Activated CD4-positive, alpha-beta T cell treated with anti-CD3 and anti-CD28 coated beads, Interleukin-2, amount 10 ng/mL, durations not matched to agents 24 days and 14 days (primary cell): ENCODE measurements at regions of chr4 and their contacts with region 1.

Region 1: DNA sequence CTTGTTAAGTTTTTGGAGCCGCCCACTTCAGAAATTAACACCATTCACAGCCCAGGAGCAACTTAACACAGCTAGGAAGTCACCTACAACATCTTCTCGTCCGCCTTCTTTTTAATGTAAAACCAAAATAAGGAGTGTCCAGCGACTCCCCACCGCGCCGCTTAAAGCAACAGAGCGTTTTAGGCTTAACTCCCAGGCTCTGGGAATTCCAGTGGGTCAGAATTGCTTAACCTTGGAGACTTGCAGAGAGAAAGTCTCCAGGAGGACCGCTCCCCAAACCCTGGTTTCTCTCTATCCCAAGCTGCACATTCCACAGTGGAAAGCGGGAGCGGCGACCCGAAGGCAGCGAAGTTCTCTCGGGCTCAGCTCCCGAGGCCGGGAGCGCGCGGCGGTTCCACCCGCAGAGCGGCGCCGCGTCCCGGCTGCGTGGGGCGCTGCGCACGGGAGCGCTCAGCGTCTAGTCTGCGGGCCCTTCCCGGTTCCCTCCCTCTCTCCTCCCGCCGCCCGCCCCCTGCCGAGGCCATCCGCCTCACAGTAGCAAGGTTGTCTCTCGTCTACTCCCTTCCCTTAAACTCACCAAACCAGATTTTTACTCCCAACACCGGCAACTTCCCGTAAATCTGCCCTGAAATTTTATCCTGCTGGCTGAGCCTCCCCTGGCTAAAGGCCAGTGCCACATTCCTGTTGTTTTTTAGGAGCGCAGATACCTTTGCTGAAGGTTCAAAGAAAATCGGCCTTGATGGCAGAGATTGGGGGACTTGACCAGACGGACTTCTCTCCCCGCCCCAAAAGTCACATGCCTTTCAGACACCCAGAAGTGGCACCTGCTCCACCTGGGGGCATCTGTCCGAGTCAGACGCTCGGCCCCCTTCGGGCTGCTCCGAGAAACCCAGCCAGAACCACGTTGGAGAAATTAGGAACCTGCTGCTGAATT is at the start of gene RBM47:
- DNase-seq: peak; percentile 73
- H3K4me3 Mint-ChIP-seq: peak within 1 kb of the TSS; percentile 89
- H3K27ac Mint-ChIP-seq: peak within 1 kb of the TSS; percentile 64
- H3K4me1 Mint-ChIP-seq: peaks cover 34% of the 10 kb centered on the region
- H3K27me3 Mint-ChIP-seq: peaks cover 20% of the 10 kb centered on the region
- total RNA-seq, gene RBM47: 10.7 and 13.0 TPM in 2 replicates

Region 2: DNA sequence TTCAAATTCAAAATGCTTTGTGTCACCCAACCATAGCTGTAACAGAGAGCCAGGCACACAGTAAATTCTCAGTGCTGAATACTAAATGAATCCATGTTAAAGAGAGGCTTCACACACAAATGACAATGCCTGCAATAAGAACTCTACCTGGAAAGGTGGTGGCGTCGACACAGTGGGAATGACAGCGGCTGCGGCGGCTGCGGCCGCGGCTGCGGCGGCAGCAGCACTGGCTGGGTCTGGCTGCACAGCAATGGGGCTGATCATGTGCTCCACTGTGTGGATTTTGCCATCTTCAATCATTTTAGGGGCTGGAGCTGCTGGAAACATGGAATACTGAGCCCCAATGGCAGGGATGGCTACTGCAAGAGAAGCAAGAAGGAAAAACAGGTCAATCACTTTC is 197.2 kb before region 1 on chr4:
- intact Hi-C with region 1: loop called (anchors 2 kb)
- DNase-seq: no peak
- H3K4me3 Mint-ChIP-seq: peak overlapping the region; percentile 45
- H3K27ac Mint-ChIP-seq: peak overlapping the region; percentile 63
- H3K4me1 Mint-ChIP-seq: peaks cover 48% of the 10 kb centered on the region
- H3K27me3 Mint-ChIP-seq: no peaks in the 10 kb centered on the region

Region 3: GRCh38 chr4:40550948-40551462 is 78.7 kb before region 1 on chr4:
- intact Hi-C with region 1: loop called (anchors 5 kb)
- DNase-seq: peak; percentile 82
- H3K4me3 Mint-ChIP-seq: peak overlapping the region; percentile 84
- H3K27ac Mint-ChIP-seq: peak overlapping the region; percentile 84
- H3K4me1 Mint-ChIP-seq: peaks cover 40% of the 10 kb centered on the region
- H3K27me3 Mint-ChIP-seq: no peaks in the 10 kb centered on the region

Region 4: DNA sequence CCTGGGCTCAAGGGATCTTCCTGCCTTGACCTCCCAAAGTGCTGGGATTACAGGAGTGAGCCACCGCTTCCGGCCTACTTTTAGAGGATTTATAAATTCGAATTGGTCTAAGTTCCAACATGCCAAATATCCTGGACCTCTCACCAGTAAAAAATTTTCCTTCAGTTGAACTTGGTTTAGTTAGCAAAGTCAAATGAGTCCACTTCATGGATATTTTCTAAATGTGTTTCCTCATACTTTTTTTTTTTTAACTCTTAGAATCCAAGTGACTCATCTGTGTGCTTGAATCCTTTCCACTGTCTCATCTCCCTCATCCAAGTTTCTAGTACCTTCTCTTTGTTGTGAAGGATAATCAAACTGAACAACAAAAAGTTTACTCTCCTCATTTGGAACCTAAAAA is 49.7 kb before region 1 on chr4:
- intact Hi-C with region 1: loop called (anchors 5 kb)
- DNase-seq: no peak
- H3K4me3 Mint-ChIP-seq: no peak overlapping the region
- H3K27ac Mint-ChIP-seq: no peak overlapping the region
- H3K4me1 Mint-ChIP-seq: peaks cover 42% of the 10 kb centered on the region
- H3K27me3 Mint-ChIP-seq: peaks cover 3% of the 10 kb centered on the region

Region 5: DNA sequence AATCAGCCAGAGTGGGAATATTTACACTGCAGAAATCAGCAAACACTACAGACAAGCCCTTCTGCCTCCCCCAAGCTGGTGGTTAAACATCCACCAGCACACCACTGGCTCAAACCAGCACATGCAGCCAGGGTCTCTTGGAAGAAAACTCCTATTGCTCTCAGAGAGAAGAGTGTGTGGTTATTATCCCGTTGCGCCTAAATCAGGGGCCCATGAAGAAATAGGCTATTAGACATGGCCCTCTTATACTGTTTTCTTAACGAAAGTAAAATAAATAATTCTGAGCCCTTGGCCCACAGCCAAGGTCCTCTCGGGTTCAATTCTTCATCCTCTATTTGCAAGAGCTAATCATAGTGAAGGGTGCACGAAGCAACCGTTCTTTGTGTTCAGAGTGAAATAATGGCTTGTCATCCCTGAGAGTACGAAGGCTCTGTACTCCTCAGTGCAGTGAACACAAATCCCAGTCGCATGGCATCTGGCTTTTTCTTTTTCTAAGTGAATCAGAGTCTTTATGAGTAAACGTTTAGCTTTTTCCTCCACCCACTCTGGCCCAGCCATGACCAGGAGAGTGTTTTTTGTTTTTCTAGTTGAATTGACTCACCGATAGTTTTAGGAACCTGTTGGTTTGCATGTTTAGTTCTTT is 33.4 kb after region 1 on chr4:
- intact Hi-C with region 1: loop called (anchors 1 kb)
- DNase-seq: no peak
- H3K4me3 Mint-ChIP-seq: peak overlapping the region; percentile 36
- H3K27ac Mint-ChIP-seq: peak overlapping the region; percentile 93
- H3K4me1 Mint-ChIP-seq: peaks cover 29% of the 10 kb centered on the region
- H3K27me3 Mint-ChIP-seq: no peaks in the 10 kb centered on the region

Region 6: DNA sequence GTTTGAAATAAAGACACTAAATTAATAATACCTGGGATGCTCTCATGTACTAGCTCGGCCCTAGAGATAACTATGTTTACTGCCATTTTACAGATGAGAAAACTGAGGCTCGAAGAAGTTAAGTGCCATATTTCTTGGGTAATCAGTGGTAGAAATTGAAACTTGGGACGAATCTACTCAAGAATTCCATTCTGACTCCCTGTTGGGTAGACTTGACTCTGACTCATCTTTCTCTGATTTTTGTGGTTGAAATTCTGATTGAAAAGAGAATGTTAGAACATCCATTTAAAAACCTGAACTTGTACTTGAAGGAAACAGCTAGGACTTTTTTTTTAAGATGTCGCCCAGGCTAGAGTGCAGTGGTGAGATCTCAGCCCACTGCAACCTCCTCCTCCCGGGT is 70.0 kb after region 1 on chr4:
- intact Hi-C with region 1: loop called (anchors 1 kb)
- DNase-seq: no peak
- H3K4me3 Mint-ChIP-seq: peak overlapping the region; percentile 4
- H3K27ac Mint-ChIP-seq: peak overlapping the region; percentile 67
- H3K4me1 Mint-ChIP-seq: peaks cover 26% of the 10 kb centered on the region
- H3K27me3 Mint-ChIP-seq: no peaks in the 10 kb centered on the region